K562 (cell line): ENCODE measurements at regions of chr10 and their contacts with region 1.

Region 1: DNA sequence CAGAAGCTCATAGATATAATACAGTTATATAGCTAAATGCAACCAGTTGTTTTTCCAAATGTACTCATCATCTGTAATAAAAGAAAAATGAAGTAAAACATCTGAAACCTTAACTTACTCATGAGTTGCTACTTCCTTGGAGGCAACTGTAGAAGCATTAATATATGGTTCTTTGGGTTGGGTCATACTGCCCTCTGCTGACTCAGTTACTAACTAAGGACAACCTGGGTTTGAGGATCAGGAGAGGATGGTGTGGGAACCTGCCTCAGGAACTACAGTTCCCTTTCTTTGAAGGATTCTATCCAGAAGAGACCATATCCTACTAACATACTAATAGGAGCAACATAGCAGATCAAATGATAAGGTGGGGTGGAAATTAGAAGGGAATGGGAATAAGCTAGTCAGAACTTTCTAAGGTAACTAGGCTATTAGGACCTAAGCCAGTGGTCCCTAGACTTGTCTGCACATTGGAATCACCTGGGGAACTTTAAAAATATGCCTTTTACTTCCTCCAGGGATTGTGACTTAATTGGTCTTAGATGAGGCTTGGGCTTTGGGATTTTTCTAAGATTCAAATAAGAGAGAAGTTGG is 20.7 kb downstream of the COX15 start:
- DNase-seq: peak; percentile 29 to 68 (median 38)
- ATAC-seq: peak; percentile 89
- H3K4me3 ChIP-seq: no peak overlapping the region
- H3K27ac ChIP-seq: no peak overlapping the region
- H3K4me1 ChIP-seq: peaks cover 0 to 31% of the 10 kb centered on the region in 2 experiments; a peak in 3 of 5 replicates
- H3K27me3 ChIP-seq: no peaks in the 10 kb centered on the region
- CTCF ChIP-seq: peak; percentile 50 to 74 (median 61)
- EP300 ChIP-seq: no peak
- POLR2A ChIP-seq: no peak
- RAD21 ChIP-seq: peak; percentile 72 to 81

Region 2: DNA sequence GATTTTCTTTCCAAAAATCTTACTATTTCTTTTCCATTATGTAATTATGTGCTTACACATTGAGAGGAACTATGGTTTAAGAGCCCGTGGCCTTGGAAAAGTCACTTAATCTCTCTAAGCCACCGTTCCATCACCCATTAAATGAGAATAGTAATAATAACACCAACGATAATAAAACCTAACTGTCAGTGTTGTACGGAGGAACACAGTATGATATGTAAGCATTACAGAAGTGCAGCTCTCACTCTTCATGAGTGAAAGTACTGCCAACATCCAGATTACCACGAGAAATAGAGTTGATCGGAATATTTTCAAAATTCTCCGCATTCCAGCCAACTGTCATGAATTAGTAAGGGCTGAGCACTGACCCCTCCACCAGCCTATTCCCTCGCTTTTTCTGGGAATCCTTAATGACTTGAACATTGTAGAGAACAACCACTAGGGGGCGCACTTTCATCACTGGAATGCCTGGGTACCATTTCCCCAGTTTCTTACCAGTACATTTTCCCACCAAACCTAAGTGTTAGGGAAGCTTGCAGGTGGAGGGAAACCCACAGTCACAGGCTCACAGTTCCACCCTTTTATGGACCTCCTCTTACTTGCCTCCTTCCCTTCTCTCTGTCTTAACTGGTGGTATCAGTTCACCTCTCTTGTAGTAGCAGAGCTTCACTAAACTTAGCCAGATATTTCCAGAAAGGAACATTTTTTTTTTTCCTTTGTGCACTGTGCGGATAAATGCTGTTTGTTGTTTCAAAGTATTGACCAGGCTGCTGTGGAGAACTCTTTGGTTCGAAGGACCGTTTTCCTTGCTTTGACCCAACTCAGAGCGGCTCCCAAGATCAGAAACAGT is 150.7 kb before region 1 on chr10:
- CTCF ChIA-PET with region 1: interaction called, 9 read pairs
- POLR2A ChIA-PET with region 1: interaction called, 3 read pairs
- in situ Hi-C with region 1: loop called (anchors 5 kb)
- intact Hi-C with region 1: loop called (anchors 2 kb)
- DNase-seq: peak; percentile 51 to 67 (median 54)
- ATAC-seq: peak; percentile 87
- H3K4me3 ChIP-seq: no peak overlapping the region
- H3K27ac ChIP-seq: no peak overlapping the region
- H3K4me1 ChIP-seq: no peaks in the 10 kb centered on the region
- H3K27me3 ChIP-seq: peaks cover 1 to 7% of the 10 kb centered on the region in 2 experiments; a peak in 3 of 5 replicates
- CTCF ChIP-seq: peak; percentile 42 to 70 (median 69)
- EP300 ChIP-seq: no peak
- POLR2A ChIP-seq: no peak
- RAD21 ChIP-seq: peak; percentile 48 to 78

Region 3: DNA sequence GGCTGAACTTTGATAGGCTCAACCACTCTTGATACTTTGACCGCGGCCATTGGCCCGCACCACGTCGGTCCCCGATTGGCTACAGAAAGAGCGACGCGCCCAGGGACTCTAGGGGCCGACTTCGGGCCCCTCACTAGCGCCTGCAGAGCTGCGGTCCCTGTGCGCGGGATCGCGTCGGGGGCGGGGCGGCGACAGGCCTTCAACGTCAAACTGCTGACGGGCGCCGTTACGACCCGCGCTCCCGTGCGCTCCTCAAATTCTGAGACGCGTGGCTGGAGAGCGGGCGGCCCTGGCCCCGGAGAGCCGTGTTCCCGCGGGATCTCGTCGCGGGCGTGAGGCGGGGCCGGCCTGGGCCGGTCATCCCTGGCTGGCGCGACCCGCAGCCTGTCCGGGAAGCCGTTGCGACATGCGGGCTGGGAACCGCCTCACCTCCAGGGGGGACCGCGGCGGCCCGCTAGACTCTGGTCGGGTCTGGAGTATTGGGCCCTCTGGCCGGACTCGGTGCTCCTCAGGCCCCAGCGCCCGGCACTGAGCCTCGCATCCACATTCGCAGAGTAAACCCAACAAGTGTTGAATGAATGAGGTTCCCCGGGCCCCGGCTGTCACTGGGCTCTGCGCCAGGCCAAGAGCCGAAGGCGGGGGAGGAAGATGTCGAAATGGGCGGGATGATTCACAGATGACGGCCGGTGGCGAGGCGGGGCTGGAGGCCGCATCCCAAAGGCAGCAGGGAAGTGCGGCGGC is 90.3 kb before region 1 on chr10:
- CTCF ChIA-PET with region 1: no interaction called
- POLR2A ChIA-PET with region 1: no interaction called
- in situ Hi-C with region 1: loop called (anchors 5 kb)
- intact Hi-C with region 1: no loop called
- DNase-seq: peak; percentile 79 to 96 (median 86)
- ATAC-seq: peak; percentile 95
- H3K4me3 ChIP-seq: peak overlapping the region; percentile 80
- H3K27ac ChIP-seq: peak overlapping the region; percentile 99
- H3K4me1 ChIP-seq: peaks cover 12 to 24% of the 10 kb centered on the region in 2 experiments; a peak in 4 of 5 replicates
- H3K27me3 ChIP-seq: no peaks in the 10 kb centered on the region
- CTCF ChIP-seq: no peak
- EP300 ChIP-seq: no peak
- POLR2A ChIP-seq: peak; percentile 86
- RAD21 ChIP-seq: no peak

Region 4: GRCh38 chr10:99630439-99630838 is 80.8 kb before region 1 on chr10:
- CTCF ChIA-PET with region 1: interaction called, 3 read pairs
- POLR2A ChIA-PET with region 1: no interaction called
- in situ Hi-C with region 1: no loop called
- intact Hi-C with region 1: loop called (anchors 1 kb)
- DNase-seq: peak in 1 of 4 experiments; percentile 39
- ATAC-seq: peak; percentile 68
- H3K4me3 ChIP-seq: no peak overlapping the region
- H3K27ac ChIP-seq: no peak overlapping the region
- H3K4me1 ChIP-seq: no peaks in the 10 kb centered on the region
- H3K27me3 ChIP-seq: no peaks in the 10 kb centered on the region; a peak in 1 of 5 replicates
- CTCF ChIP-seq: peak; percentile 21 to 64 (median 23); a peak in 3 of 6 replicates
- EP300 ChIP-seq: no peak
- POLR2A ChIP-seq: no peak
- RAD21 ChIP-seq: peak; percentile 65 to 72

Region 5: GRCh38 chr10:99880080-99880835 is 169.0 kb after region 1 on chr10:
- CTCF ChIA-PET with region 1: no interaction called
- POLR2A ChIA-PET with region 1: no interaction called
- in situ Hi-C with region 1: no loop called
- intact Hi-C with region 1: no loop called
- DNase-seq: no peak
- ATAC-seq: no peak
- H3K4me3 ChIP-seq: no peak overlapping the region
- H3K27ac ChIP-seq: no peak overlapping the region
- H3K4me1 ChIP-seq: no peaks in the 10 kb centered on the region
- H3K27me3 ChIP-seq: no peaks in the 10 kb centered on the region
- CTCF ChIP-seq: no peak
- EP300 ChIP-seq: no peak
- POLR2A ChIP-seq: no peak
- RAD21 ChIP-seq: no peak